ENCODE measurements at regions of chr3 and their contacts with region 1.

Region 1: DNA sequence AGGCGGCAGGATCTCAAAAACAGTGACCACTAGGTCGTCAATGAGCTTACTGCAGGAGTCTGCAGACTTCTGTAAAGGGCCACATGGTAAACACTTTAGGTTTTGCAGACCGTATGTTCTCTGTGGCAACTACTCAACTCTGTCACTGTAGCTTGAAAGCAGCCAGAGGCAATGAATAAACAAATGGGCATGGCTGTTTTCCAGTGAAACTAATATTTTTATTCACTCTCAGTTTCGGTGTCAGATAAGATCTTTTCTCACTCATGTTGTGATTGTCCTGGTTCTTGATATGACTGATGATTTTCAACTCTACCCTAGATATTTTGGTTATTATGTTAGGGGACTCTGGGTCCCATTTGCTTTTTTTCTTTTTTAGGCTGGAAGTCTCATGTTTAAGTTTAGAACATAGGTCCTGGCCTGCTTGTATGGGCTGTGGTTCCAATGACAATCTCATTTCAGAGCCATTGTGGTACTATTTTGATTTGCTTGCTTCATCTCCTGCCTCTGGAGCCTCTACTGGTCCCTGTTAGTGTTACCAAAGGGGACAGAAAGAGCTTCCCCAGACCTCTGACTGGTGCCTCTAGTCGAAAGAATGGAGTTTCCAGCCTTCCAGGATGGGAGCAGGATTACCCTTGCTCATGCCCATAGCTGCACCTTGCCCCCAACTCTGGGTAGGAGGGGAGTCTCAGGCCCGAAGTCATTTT is 222.0 kb downstream of the STT3B start:
- DNase-seq: no peak
- H3K4me3 ChIP-seq: no peak overlapping the region
- H3K27ac ChIP-seq: no peak overlapping the region
- H3K4me1 ChIP-seq: peaks cover 11% of the 10 kb centered on the region
- H3K27me3 ChIP-seq: no peaks in the 10 kb centered on the region
- CTCF ChIP-seq: no peak

Region 2: GRCh38 chr3:31610700-31611275 is 143.9 kb before region 1 on chr3:
- intact Hi-C with region 1: loop called (anchors 10 kb)
- DNase-seq: no peak
- H3K4me3 ChIP-seq: no peak overlapping the region
- H3K27ac ChIP-seq: no peak overlapping the region
- H3K4me1 ChIP-seq: peaks cover 22% of the 10 kb centered on the region
- H3K27me3 ChIP-seq: no peaks in the 10 kb centered on the region
- CTCF ChIP-seq: peak; percentile 66